Caco-2 (cell line): ENCODE measurements at regions of chr6 and their contacts with region 1.

Region 1: DNA sequence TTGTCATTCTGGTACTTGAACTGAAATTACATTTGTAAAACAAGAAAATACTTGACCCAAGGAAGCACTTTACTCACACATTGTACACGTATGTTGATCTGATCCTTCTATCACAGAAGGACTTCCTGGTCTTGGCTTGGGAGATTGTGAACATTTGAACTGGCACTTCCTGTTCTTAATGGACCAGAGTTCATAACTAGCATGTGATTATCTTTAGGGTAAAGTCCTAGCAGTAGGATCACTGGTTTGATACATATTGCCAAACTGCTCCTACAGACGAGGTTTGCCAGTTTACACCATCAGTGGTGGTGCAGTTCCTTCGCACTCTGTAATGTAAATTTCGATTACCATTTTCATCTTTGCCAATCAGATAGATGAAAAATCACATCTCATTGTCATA is 12.7 kb downstream of the HECA start:
- DNase-seq: no peak
- H3K4me3 ChIP-seq: no peak overlapping the region
- H3K4me3 Mint-ChIP-seq: no peak overlapping the region
- H3K27ac Mint-ChIP-seq: peak overlapping the region; percentile 35
- H3K4me1 ChIP-seq: peaks cover 29% of the 10 kb centered on the region
- H3K4me1 Mint-ChIP-seq: peaks cover 29% of the 10 kb centered on the region
- H3K27me3 ChIP-seq: no peaks in the 10 kb centered on the region
- H3K27me3 Mint-ChIP-seq: no peaks in the 10 kb centered on the region
- CTCF ChIP-seq: no peak

Region 2: GRCh38 chr6:139134817-139135581 is 12.6 kb before region 1 on chr6 and contains the start of gene HECA:
- CTCF ChIA-PET with region 1: no interaction called
- POLR2A ChIA-PET with region 1: no interaction called
- intact Hi-C with region 1: loop called (anchors 1 kb)
- DNase-seq: peak; percentile 96 to 97
- H3K4me3 ChIP-seq: peak within 1 kb of the TSS; percentile 89
- H3K4me3 Mint-ChIP-seq: peak within 1 kb of the TSS; percentile 82
- H3K27ac Mint-ChIP-seq: peak within 1 kb of the TSS; percentile 74
- H3K4me1 ChIP-seq: no peaks in the 10 kb centered on the region
- H3K4me1 Mint-ChIP-seq: peaks cover 7% of the 10 kb centered on the region
- H3K27me3 ChIP-seq: no peaks in the 10 kb centered on the region
- H3K27me3 Mint-ChIP-seq: no peaks in the 10 kb centered on the region
- CTCF ChIP-seq: no peak
- total RNA-seq, gene HECA: 4.9 and 5.2 TPM in 2 replicates

Region 3: GRCh38 chr6:139204978-139205377 is 57.4 kb after region 1 on chr6:
- CTCF ChIA-PET with region 1: no interaction called
- POLR2A ChIA-PET with region 1: no interaction called
- intact Hi-C with region 1: no loop called
- DNase-seq: no peak
- H3K4me3 ChIP-seq: no peak overlapping the region
- H3K4me3 Mint-ChIP-seq: no peak overlapping the region
- H3K27ac Mint-ChIP-seq: no peak overlapping the region
- H3K4me1 ChIP-seq: no peaks in the 10 kb centered on the region
- H3K4me1 Mint-ChIP-seq: no peaks in the 10 kb centered on the region
- H3K27me3 ChIP-seq: no peaks in the 10 kb centered on the region
- H3K27me3 Mint-ChIP-seq: peaks cover 3% of the 10 kb centered on the region
- CTCF ChIP-seq: no peak